Breast epithelium (tissue), 4 donors: ENCODE measurements at regions of chr6 and their contacts with region 1.

Region 1: DNA sequence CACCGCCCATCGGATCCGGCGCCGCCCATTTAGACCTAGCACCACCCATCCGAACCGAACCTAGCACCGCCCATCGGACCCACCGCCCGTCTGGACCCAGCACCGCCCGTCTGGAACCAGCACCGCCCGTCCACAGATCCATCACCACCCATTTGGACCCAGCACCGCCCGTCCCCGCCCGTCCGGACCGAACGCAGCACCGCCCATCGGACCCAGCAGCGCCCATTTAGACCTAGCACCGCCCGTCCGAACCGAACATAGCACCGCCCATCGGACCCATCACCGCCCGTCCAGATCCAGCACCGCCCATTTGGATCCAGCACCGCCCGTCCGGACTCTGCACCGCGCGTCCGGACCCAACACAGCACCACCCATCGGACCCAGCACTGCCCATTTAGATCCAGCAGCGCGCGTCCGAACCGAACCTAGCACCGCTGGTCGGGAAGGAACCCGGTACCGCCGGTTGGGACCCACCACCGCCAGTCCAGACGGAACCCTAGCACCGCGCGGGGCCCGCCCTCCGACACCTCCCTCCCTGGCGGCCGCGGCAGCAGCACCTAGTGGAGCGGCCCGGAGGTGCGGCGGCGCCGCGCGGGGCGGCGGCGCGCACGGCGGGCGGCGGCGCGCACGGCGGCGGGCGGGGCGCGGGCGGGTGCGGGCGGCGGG is 348 bp upstream of the AFDN start:
- DNase-seq: peak; percentile 66 to 78
- H3K4me3 ChIP-seq: peak overlapping the region; percentile 61 to 86 (median 80)
- H3K27ac ChIP-seq: peak overlapping the region; percentile 79 to 96
- H3K4me1 ChIP-seq: peaks cover 0 to 6% of the 10 kb centered on the region in 2 donors
- H3K27me3 ChIP-seq: no peaks in the 10 kb centered on the region
- CTCF ChIP-seq: peak; percentile 49 to 67 (median 55)
- POLR2A ChIP-seq: no peak

Region 2: DNA sequence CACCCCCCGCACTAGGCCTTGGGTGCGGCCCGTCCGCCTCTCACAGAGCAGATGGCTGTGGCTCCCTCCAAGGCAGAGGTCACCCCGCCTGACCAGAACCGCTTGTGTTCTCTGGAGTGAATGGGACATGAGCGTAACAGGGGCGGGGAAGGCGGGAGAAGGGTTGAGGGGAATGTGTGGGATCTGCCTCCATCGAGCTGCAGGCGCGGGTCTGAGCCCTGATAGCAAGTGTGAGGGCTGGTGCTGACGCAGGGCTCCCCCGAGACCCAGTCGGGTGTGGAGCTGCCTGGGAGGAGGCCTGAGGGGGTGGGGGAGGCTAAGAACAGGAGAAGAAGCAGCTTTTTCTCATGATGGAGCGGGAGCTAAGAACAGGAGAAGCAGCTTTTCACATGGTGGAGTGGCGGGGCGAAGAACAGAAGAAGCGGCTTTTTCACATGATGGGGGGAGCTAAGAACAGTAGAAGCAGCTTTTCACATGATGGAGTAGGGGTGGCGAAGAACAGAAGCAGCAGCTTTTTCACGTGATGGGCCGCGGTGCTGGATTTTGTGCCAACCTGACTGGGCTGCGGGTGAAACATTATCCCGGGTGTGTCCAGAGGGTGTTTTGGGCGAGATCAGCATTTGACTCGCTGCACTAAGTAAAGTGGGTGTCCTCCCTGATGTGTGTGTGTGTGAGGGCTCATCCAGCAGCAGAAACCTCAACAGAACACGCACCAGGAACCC is 332.2 kb before region 1 on chr6:
- intact Hi-C with region 1: loop called (anchors 1 kb)
- DNase-seq: no peak
- H3K4me3 ChIP-seq: peak overlapping the region in 1 of 3 donors; percentile 2
- H3K27ac ChIP-seq: peak overlapping the region in 1 of 2 donors; percentile 10
- H3K4me1 ChIP-seq: no peaks in the 10 kb centered on the region
- H3K27me3 ChIP-seq: no peaks in the 10 kb centered on the region
- CTCF ChIP-seq: no peak
- POLR2A ChIP-seq: no peak

Region 3: DNA sequence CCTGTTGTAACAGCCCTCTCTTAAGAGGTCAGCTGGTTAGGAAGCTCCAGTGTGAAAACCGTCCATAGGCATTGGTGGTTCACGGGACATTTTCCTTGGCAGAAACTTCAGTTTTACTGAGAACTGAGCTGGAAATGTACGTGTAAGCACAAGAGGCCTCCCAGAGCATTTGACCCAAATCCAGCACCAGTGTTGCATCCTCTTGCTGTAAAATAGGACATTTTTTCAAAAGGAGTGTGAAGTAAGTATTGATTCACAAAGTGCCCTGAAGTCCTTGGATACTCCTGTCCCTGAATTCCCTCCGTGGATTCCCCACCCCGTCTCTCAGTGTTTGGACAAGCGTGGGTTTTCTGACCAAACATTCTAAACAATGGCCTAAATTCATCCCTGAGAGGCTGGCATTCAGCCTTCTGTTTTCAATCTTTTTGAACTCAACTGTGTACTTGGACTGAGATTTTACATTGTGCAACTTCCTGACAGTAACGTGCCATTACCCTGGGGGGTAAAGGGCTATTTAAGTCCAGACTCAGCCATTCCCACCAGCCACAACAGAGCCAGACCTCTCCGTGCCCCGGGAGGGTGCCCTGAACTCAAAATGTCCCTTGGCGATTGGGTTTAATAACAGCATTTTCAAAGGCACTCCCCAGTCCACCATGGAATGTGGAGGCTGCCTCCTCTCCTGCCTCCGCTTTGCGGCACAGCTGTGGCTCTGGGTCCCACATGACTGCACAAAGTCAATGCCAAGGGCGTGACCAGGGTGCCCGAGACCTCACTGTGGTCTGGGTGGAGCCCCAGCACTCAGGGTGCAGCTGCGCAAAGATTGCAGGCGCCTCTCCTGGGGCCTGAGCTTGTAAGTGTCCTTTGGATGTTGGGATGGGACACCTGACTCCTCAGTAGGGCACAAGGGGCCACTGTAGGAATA is 92.4 kb before region 1 on chr6:
- intact Hi-C with region 1: loop called (anchors 2 kb)
- DNase-seq: peak in 1 of 2 donors; percentile 87
- H3K4me3 ChIP-seq: peak overlapping the region in 1 of 3 donors; percentile 14
- H3K27ac ChIP-seq: peak overlapping the region; percentile 81 to 82
- H3K4me1 ChIP-seq: peaks cover 0 to 2% of the 10 kb centered on the region in 2 donors
- H3K27me3 ChIP-seq: no peaks in the 10 kb centered on the region
- CTCF ChIP-seq: no peak
- POLR2A ChIP-seq: peak; percentile 6